MCF 10A (cell line): ENCODE measurements at regions of chr10 and their contacts with region 1.

Region 1: GRCh38 chr10:7525314-7526016 is 114.6 kb upstream of the SFMBT2 start:
- DNase-seq: peak; percentile 78
- H3K4me3 Mint-ChIP-seq: no peak overlapping the region
- H3K27ac Mint-ChIP-seq: no peak overlapping the region
- H3K4me1 Mint-ChIP-seq: peaks cover 6% of the 10 kb centered on the region
- H3K27me3 Mint-ChIP-seq: peaks cover 26% of the 10 kb centered on the region
- CTCF ChIP-seq: peak; percentile 71

Region 2: GRCh38 chr10:7687228-7687907 is 161.9 kb after region 1 on chr10:
- CTCF ChIA-PET with region 1: interaction called, 136 read pairs
- POLR2A ChIA-PET with region 1: interaction called, 12 read pairs
- intact Hi-C with region 1: loop called (anchors 1 kb)
- DNase-seq: peak; percentile 89
- H3K4me3 Mint-ChIP-seq: no peak overlapping the region
- H3K27ac Mint-ChIP-seq: no peak overlapping the region
- H3K4me1 Mint-ChIP-seq: peaks cover 12% of the 10 kb centered on the region
- H3K27me3 Mint-ChIP-seq: peaks cover 1% of the 10 kb centered on the region
- CTCF ChIP-seq: peak; percentile 90

Region 3: DNA sequence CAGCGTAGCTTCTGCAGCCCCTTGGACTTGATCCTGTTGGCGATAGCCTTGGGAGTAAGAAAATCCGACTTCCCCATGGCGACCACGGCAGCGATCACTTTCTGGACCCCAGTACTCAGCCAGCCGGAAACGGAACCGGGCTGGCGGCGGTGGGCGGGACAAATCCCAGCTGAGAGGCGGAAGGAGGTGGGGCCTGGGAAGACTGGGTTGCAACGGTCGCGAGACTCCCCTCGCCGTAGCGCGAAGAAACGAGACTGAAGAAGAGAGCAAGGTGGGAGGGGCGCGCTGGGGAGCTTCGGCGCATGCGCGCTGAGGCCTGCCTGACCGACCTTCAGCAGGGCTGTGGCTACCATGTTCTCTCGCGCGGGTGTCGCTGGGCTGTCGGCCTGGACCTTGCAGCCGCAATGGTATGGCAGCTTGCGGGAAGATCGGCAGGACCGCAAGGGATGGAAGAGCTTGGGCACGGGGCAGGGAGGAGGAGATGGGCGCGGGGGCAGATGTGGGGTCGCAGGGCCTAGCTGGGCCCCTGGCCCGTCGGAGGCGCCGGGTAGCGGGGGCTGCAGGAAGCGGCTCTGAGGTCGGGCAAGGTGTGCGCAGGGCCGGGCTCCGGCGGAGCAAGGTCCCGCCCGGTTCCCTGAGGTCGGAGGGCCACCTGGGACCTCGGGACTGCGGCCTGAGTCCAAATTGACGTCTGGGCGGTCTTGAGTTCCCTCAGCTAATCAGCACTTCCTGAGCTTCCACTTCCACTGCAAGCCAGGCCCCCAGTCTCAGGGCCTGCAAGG is 262.6 kb after region 1 on chr10 and contains the starts of genes ATP5F1C and KIN:
- CTCF ChIA-PET with region 1: interaction called, 11 read pairs
- POLR2A ChIA-PET with region 1: interaction called, 5 read pairs
- intact Hi-C with region 1: no loop called
- DNase-seq: peak; percentile 97
- H3K4me3 Mint-ChIP-seq: no peak within 1 kb of the TSS
- H3K27ac Mint-ChIP-seq: no peak within 1 kb of the TSS
- H3K4me1 Mint-ChIP-seq: peaks cover 43% of the 10 kb centered on the region
- H3K27me3 Mint-ChIP-seq: no peaks in the 10 kb centered on the region
- CTCF ChIP-seq: no peak
- total RNA-seq, gene ATP5F1C: 268 and 281 TPM in 2 replicates
- total RNA-seq, gene KIN: 13.0 and 15.8 TPM in 2 replicates

Region 4: GRCh38 chr10:7872041-7872442 is 346.6 kb after region 1 on chr10:
- CTCF ChIA-PET with region 1: interaction called, 4 read pairs
- POLR2A ChIA-PET with region 1: no interaction called
- intact Hi-C with region 1: loop called (anchors 1 kb)
- DNase-seq: peak; percentile 47
- H3K4me3 Mint-ChIP-seq: peak overlapping the region; percentile 78
- H3K27ac Mint-ChIP-seq: no peak overlapping the region
- H3K4me1 Mint-ChIP-seq: no peaks in the 10 kb centered on the region
- H3K27me3 Mint-ChIP-seq: no peaks in the 10 kb centered on the region
- CTCF ChIP-seq: peak; percentile 33

Region 5: DNA sequence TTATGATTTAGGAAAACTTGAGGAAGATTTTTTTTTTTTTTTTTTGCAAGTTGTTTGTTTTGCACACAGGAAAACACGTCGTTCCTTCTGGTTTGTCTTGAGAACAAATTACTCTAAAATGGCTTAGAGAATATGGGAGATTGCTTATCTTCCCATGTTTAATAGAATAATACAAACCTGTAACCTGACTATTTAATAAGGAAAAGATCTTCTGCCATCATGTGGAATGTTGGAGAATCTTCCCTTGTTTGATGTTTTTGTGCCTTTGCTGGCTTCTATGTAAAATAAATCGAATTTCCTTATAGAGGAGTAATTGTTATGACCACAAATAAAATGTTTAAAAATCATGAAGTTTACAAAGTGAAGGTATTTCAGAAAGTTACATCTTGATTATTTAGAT is 1347.8 kb after region 1 on chr10:
- CTCF ChIA-PET with region 1: interaction called, 3 read pairs
- POLR2A ChIA-PET with region 1: no interaction called
- intact Hi-C with region 1: loop called (anchors 5 kb)
- DNase-seq: peak; percentile 29
- H3K4me3 Mint-ChIP-seq: no peak overlapping the region
- H3K27ac Mint-ChIP-seq: no peak overlapping the region
- H3K4me1 Mint-ChIP-seq: peaks cover 19% of the 10 kb centered on the region
- H3K27me3 Mint-ChIP-seq: no peaks in the 10 kb centered on the region
- CTCF ChIP-seq: peak; percentile 36